Activated CD4-positive, alpha-beta T cell treated with anti-CD3 and anti-CD28 coated beads, Interleukin-2, amount 10 ng/mL, durations not matched to agents 24 days and 14 days (primary cell): ENCODE measurements at regions of chr1 and their contacts with region 1.

Region 1: DNA sequence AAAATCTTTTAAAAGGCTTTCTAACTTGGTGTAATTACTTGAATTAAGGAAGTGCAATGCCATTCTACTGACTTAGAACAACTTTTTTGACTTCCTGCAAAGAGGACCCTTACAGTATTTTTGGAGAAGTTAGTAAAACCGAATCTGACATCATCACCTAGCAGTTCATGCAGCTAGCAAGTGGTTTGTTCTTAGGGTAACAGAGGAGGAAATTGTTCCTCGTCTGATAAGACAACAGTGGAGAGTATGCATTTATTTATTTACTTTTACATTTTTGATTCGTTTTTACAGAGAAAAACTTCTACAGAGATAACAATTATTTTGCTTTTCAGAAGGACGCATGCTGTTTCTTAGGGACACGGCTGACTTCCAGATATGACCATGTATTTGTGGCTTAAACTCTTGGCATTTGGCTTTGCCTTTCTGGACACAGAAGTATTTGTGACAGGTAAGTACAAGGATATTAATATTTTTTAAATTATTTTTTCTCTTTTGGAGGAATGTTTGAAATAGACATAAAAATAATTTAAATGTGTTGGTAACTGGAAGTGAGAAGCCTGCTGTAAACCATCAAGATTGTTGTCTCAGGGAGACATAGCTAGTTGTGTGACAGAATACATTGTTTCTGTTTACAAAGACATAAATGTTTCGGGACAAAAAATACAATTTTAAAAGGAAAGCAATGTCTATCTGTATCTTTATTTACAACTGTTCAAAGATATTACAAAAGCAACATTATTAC is at the start of gene PTPRC:
- DNase-seq: peak; percentile 84
- H3K4me3 Mint-ChIP-seq: peak within 1 kb of the TSS; percentile 89
- H3K27ac Mint-ChIP-seq: peak within 1 kb of the TSS; percentile 95
- H3K4me1 Mint-ChIP-seq: peaks cover 47% of the 10 kb centered on the region
- H3K27me3 Mint-ChIP-seq: no peaks in the 10 kb centered on the region
- total RNA-seq, gene PTPRC: 436 and 438 TPM in 2 replicates

Region 2: DNA sequence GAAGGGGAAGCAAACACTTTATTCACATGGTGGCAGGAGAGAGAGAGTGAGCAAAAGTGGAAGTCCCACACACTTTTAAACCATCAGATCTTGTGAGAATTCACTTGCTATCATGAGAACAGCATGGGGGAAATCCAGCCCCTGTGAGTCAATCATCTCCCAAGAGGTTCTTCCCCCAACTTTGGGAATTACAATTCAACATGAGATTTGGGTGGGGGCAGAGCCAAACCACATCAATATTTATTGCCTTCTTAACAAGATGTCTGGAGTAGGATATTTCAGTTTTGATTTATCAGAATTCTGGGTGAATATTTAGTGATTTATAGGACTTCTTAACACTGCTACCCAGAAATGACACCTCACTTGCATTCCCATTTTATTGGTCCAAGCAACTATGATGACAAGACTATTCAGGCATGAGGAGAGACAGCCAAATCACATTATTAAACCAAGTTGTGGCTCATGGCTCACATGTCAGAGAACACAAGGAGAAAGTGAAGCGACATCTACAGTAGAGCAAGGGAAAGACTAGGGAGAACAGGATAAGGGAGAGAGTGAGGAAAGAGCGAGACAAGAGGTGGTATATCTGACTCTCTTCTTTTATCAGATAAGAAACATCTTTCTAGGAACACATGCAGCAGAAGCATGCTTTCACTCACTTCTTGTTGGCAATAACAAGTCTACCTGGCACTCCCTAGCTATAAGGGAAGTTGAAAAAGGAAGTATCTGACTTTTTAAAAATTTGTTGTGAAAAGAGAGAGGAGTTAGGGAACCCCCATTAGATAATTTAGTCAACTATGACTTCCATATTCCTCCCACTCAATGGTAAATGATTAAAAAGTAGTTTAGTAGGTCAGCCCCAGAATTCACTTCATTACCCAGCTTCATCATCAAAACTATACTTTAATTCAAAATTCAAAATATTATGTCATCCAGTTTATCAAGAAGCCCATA is 36.9 kb before region 1 on chr1:
- intact Hi-C with region 1: loop called (anchors 1 kb)
- DNase-seq: no peak
- H3K4me3 Mint-ChIP-seq: peak overlapping the region; percentile 32
- H3K27ac Mint-ChIP-seq: peak overlapping the region; percentile 83
- H3K4me1 Mint-ChIP-seq: peaks cover 55% of the 10 kb centered on the region
- H3K27me3 Mint-ChIP-seq: no peaks in the 10 kb centered on the region

Region 3: DNA sequence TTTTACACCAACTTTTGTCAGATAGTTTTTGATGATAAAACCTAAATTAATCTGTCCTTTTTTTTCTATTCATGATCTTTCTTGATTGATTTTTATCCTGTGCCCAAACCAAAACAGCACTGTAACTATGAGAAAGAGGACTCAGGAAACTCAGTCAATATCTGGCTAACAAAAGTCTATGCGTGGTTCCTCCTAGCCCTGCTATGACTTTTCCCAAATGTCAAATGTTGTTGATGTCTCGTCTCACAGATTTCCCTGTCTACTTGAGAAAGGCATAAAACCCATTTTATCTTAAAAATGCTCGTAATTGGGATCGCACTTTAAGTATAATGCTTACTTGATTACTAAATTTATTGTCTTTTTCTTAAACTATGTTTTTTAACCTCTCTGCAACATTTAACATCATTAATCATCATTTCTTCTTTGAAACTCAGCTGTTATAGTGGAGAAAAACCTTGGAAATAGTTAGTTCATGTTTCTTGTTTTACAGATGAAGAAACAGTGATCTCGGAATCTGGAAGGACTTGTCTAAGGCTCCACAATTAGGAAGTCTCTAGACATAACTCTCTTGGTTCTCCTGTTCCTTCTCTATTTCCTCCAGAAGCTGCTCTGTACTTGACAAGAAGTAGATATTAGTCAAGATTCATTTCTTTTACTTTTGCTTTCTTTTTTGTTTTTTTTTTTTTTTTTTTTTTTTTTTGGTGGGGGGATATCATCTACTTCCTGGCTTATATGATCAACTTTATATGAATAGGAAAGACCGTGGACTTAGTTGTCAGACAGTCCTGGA is 26.4 kb before region 1 on chr1:
- intact Hi-C with region 1: loop called (anchors 1 kb)
- DNase-seq: peak; percentile 58
- H3K4me3 Mint-ChIP-seq: peak overlapping the region; percentile 83
- H3K27ac Mint-ChIP-seq: peak overlapping the region; percentile 94
- H3K4me1 Mint-ChIP-seq: peaks cover 59% of the 10 kb centered on the region
- H3K27me3 Mint-ChIP-seq: no peaks in the 10 kb centered on the region

Region 4: GRCh38 chr1:198649968-198650338 is 10.9 kb after region 1 on chr1:
- intact Hi-C with region 1: loop called (anchors 1 kb)
- DNase-seq: peak; percentile 80
- H3K4me3 Mint-ChIP-seq: peak overlapping the region; percentile 81
- H3K27ac Mint-ChIP-seq: peak overlapping the region; percentile 88
- H3K4me1 Mint-ChIP-seq: peaks cover 58% of the 10 kb centered on the region
- H3K27me3 Mint-ChIP-seq: no peaks in the 10 kb centered on the region

Region 5: GRCh38 chr1:198657550-198658064 is 18.5 kb after region 1 on chr1:
- intact Hi-C with region 1: loop called (anchors 1 kb)
- DNase-seq: peak; percentile 77
- H3K4me3 Mint-ChIP-seq: peak overlapping the region; percentile 92
- H3K27ac Mint-ChIP-seq: peak overlapping the region; percentile 86
- H3K4me1 Mint-ChIP-seq: peaks cover 43% of the 10 kb centered on the region
- H3K27me3 Mint-ChIP-seq: no peaks in the 10 kb centered on the region

Region 6: DNA sequence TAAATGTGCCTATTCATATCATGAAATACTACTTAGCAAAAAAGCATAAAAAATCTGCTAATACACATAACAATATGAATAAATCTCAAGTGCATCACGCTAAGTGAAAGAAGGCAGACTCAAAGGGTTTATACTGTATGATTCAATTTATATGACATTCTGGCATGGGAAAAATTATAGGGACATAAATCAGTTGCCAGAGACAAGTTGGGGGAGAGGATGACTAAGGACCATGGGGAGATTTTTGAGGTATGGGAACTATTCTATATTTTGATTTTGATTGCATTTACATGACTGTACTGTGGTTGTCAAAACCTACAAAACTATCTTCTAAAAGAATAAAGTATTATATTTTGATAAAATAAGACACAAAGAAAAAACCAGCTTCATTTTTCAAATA is 738.1 kb after region 1 on chr1:
- intact Hi-C with region 1: no loop called
- DNase-seq: no peak
- H3K4me3 Mint-ChIP-seq: no peak overlapping the region
- H3K27ac Mint-ChIP-seq: no peak overlapping the region
- H3K4me1 Mint-ChIP-seq: no peaks in the 10 kb centered on the region
- H3K27me3 Mint-ChIP-seq: peaks cover 10% of the 10 kb centered on the region